Sigmoid colon (tissue), 7 donors: ENCODE measurements at regions of chr14 and their contacts with region 1.

Region 1: GRCh38 chr14:36941783-36942521 is 230.5 kb downstream of the SLC25A21 start:
- DNase-seq: peak; percentile 71
- H3K4me3 ChIP-seq: no peak overlapping the region
- H3K27ac ChIP-seq: no peak overlapping the region
- H3K4me1 ChIP-seq: no peaks in the 10 kb centered on the region
- H3K27me3 ChIP-seq: peaks cover 0 to 3% (median 0%) of the 10 kb centered on the region in 3 donors
- CTCF ChIP-seq: peak; percentile 32 to 95 (median 80)
- EP300 ChIP-seq: no peak
- POLR2A ChIP-seq: no peak

Region 2: GRCh38 chr14:36553656-36554260 is 388.2 kb before region 1 on chr14:
- intact Hi-C with region 1: loop called (anchors 5 kb)
- DNase-seq: no peak
- H3K4me3 ChIP-seq: no peak overlapping the region
- H3K27ac ChIP-seq: no peak overlapping the region
- H3K4me1 ChIP-seq: no peaks in the 10 kb centered on the region
- H3K27me3 ChIP-seq: peaks cover 0 to 6% (median 0%) of the 10 kb centered on the region in 3 donors
- CTCF ChIP-seq: peak in 2 of 4 experiments; percentile 34 to 52
- EP300 ChIP-seq: no peak
- POLR2A ChIP-seq: no peak

Region 3: GRCh38 chr14:36647824-36648753 is 293.9 kb before region 1 on chr14:
- intact Hi-C with region 1: loop called (anchors 1 kb)
- DNase-seq: no peak
- H3K4me3 ChIP-seq: peak overlapping the region; percentile 6 to 42 (median 32)
- H3K27ac ChIP-seq: no peak overlapping the region
- H3K4me1 ChIP-seq: peaks cover 0 to 21% (median 17%) of the 10 kb centered on the region in 4 donors
- H3K27me3 ChIP-seq: peaks cover 36 to 87% (median 61%) of the 10 kb centered on the region in 3 donors
- CTCF ChIP-seq: peak in 3 of 4 experiments; percentile 8 to 35 (median 26)
- EP300 ChIP-seq: no peak
- POLR2A ChIP-seq: no peak

Region 4: GRCh38 chr14:36773136-36773540 is 168.8 kb before region 1 on chr14:
- intact Hi-C with region 1: no loop called
- DNase-seq: no peak
- H3K4me3 ChIP-seq: no peak overlapping the region
- H3K27ac ChIP-seq: no peak overlapping the region
- H3K4me1 ChIP-seq: no peaks in the 10 kb centered on the region
- H3K27me3 ChIP-seq: no peaks in the 10 kb centered on the region
- CTCF ChIP-seq: no peak
- EP300 ChIP-seq: no peak
- POLR2A ChIP-seq: no peak

Region 5: GRCh38 chr14:37187294-37187693 is 245.3 kb after region 1 on chr14:
- intact Hi-C with region 1: no loop called
- DNase-seq: no peak
- H3K4me3 ChIP-seq: no peak overlapping the region
- H3K27ac ChIP-seq: no peak overlapping the region
- H3K4me1 ChIP-seq: no peaks in the 10 kb centered on the region
- H3K27me3 ChIP-seq: no peaks in the 10 kb centered on the region
- CTCF ChIP-seq: no peak
- EP300 ChIP-seq: no peak
- POLR2A ChIP-seq: no peak